ENCODE measurements at regions of chr19 and their contacts with region 1.

Region 1: DNA sequence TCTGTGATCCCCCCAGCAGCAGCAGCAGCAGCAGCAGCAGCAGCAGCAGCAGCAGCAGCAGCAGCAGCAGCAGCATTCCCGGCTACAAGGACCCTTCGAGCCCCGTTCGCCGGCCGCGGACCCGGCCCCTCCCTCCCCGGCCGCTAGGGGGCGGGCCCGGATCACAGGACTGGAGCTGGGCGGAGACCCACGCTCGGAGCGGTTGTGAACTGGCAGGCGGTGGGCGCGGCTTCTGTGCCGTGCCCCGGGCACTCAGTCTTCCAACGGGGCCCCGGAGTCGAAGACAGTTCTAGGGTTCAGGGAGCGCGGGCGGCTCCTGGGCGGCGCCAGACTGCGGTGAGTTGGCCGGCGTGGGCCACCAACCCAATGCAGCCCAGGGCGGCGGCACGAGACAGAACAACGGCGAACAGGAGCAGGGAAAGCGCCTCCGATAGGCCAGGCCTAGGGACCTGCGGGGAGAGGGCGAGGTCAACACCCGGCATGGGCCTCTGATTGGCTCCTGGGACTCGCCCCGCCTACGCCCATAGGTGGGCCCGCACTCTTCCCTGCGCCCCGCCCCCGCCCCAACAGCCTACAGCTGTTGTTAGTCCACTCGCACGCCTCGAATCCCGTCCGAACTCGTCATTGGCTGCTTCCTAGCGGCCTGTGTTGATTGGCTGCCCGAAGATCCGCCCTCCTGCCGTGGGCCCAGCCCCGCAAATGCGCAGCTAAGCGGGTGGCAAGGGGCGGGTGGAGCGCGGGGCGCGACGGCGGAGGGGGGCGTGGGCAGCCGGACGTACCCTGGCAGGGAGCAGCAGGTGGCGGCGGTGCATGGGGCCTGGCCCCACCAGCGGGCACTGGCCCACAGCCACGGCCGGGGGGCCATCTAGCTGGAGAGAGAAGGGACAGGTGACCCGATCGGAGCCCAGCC is 1.4 kb upstream of the SIX5 start:
- DNase-seq: peak; percentile 96
- H3K4me3 Mint-ChIP-seq: peak overlapping the region; percentile 84
- H3K27ac Mint-ChIP-seq: peak overlapping the region; percentile 88
- H3K4me1 Mint-ChIP-seq: peaks cover 21% of the 10 kb centered on the region
- H3K27me3 Mint-ChIP-seq: no peaks in the 10 kb centered on the region
- CTCF ChIP-seq: peak; percentile 99

Region 2: DNA sequence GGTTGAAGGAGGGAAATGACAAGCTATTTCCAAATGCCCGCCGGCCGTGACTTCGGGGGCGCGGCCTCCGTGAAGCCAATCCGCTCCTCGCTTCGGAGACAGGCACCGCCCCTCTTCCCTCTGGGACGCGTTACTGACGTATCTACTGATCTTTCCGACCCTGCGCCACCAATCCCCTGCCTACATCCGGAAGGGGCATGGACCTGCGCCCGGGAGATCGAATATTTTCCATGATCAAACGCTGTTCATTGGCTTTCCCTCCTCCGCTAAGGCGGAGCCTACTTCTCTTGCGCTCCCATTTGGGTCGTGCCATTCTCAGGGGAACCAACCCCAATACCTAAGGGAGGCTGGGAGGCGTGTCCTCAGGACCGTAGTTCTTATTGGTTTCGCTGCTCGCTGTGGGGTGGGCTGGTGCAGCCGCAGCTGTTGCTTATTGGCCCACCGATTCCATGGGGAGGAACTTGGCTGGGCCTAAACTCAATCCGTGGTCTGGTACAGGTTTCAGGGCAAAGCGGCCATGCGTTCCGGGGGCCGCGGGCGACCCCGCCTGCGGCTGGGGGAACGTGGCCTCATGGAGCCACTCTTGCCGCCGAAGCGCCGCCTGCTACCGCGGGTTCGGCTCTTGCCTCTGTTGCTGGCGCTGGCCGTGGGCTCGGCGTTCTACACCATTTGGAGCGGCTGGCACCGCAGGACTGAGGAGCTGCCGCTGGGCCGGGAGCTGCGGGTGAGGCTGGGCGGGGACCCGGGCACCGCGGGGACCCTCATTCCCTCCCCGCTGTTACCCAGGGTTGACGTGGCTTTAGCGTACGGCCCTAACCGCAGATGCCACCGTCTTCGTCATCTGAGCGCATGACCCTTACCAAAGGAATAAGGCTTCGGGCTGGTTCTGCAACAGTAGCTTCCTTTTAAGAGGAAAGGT is 78.0 kb before region 1 on chr19 and contains the start of gene QPCTL:
- CTCF ChIA-PET with region 1: interaction called, 46 read pairs
- intact Hi-C with region 1: no loop called
- DNase-seq: peak; percentile 99
- H3K4me3 Mint-ChIP-seq: peak within 1 kb of the TSS; percentile 82
- H3K27ac Mint-ChIP-seq: peak within 1 kb of the TSS; percentile 90
- H3K4me1 Mint-ChIP-seq: peaks cover 3% of the 10 kb centered on the region
- H3K27me3 Mint-ChIP-seq: no peaks in the 10 kb centered on the region
- CTCF ChIP-seq: no peak
- total RNA-seq, gene QPCTL: 20.4 and 20.7 TPM in 2 replicates

Region 3: GRCh38 chr19:45730389-45731288 is 39.8 kb before region 1 on chr19 and contains the start of gene FBXO46:
- CTCF ChIA-PET with region 1: interaction called, 20 read pairs
- intact Hi-C with region 1: no loop called
- DNase-seq: peak; percentile 97
- H3K4me3 Mint-ChIP-seq: peak within 1 kb of the TSS; percentile 97
- H3K27ac Mint-ChIP-seq: peak within 1 kb of the TSS; percentile 83
- H3K4me1 Mint-ChIP-seq: peaks cover 26% of the 10 kb centered on the region
- H3K27me3 Mint-ChIP-seq: no peaks in the 10 kb centered on the region
- CTCF ChIP-seq: no peak
- total RNA-seq, gene FBXO46: 43.8 and 53.6 TPM in 2 replicates

Region 4: DNA sequence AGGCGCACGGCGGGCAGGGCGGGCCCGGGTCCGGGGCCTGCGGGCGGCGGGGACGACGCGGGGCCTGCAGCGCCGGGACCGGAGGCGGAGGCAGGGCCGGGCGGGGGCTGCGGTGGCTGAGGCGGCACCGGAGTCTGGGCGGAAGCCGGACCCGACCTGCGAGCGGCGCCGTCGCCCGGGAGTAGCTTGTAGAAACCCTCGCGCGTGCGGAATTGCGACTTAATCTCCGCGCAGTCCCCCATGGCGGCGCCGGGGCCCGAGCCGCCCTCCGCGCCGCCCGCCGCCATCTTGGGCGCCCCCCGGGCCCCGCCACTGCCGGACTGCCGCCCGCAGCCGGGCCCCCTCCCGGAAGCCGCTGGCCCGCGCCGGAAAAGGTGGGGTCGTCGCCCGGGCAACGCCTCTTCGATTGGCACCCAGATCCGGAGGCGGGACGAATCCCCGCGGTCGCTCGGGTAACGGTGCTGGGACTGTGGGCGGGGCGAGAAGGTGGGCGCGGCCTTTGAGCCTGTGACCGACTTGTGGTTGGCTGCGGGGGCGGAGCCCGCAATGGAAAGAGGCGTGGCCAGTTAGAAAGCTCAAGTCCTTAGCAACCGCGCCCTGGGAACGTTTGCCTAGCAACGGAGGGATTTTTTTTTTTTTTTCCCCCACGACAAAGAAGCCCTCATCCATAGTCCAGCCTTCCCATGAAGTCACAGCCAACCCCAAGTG is 22.2 kb after region 1 on chr19 and contains the start of gene DMWD:
- CTCF ChIA-PET with region 1: interaction called, 16 read pairs
- intact Hi-C with region 1: no loop called
- DNase-seq: peak; percentile 100
- H3K4me3 Mint-ChIP-seq: peak within 1 kb of the TSS; percentile 93
- H3K27ac Mint-ChIP-seq: peak within 1 kb of the TSS; percentile 83
- H3K4me1 Mint-ChIP-seq: peaks cover 33% of the 10 kb centered on the region
- H3K27me3 Mint-ChIP-seq: peaks cover 26% of the 10 kb centered on the region
- CTCF ChIP-seq: no peak
- total RNA-seq, gene DMWD: 74.9 and 76.9 TPM in 2 replicates

Measured in Calu3 (cell line).